ENCODE measurements at regions of chr5 and their contacts with region 1.

Region 1: GRCh38 chr5:177071666-177072385 is 14.9 kb upstream of the FGFR4 start:
- DNase-seq: peak; percentile 96
- ATAC-seq: peak; percentile 97
- H3K4me3 ChIP-seq: no peak overlapping the region
- H3K27ac ChIP-seq: no peak overlapping the region
- H3K4me1 ChIP-seq: no peaks in the 10 kb centered on the region
- H3K27me3 ChIP-seq: no peaks in the 10 kb centered on the region
- CTCF ChIP-seq: peak; percentile 96

Region 2: GRCh38 chr5:176875783-176876505 is 195.9 kb before region 1 on chr5:
- CTCF ChIA-PET with region 1: no interaction called
- POLR2A ChIA-PET with region 1: no interaction called
- intact Hi-C with region 1: no loop called
- DNase-seq: no peak
- ATAC-seq: no peak
- H3K4me3 ChIP-seq: no peak overlapping the region
- H3K27ac ChIP-seq: no peak overlapping the region
- H3K4me1 ChIP-seq: no peaks in the 10 kb centered on the region
- H3K27me3 ChIP-seq: peaks cover 25% of the 10 kb centered on the region
- CTCF ChIP-seq: no peak

Region 3: DNA sequence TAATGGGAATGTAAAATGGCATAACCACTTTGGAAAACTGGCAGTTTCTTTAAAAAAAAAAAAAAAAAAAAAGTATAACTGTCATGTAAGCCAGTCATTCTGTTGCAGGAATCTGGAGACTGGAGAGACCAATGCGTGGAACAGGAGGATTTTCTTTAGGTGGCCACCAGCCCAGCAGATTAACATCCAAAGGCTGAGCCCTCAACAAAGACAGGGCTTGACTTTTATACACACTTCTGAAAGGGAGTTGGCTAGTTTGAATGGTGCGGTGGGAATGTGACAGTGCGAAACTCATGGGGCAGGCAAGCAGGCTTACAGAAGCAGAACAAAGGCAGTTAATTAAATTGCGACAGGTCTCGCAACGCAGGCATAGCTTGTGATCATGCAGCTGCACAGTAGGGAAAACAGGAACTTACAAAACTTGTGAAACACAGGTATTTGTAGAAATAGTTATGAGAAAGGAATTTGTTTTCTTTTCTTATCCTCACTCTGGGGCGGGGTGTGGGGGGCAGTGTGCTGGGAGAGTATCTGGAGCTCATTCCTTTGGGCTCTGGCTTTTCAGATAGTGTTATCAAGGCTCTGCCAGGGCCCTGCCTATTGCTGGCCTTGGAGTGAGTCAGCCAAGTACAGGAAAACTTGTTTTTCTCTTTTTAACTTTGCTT is 77.2 kb before region 1 on chr5:
- CTCF ChIA-PET with region 1: interaction called, 21 read pairs
- POLR2A ChIA-PET with region 1: no interaction called
- intact Hi-C with region 1: no loop called
- DNase-seq: no peak
- ATAC-seq: no peak
- H3K4me3 ChIP-seq: no peak overlapping the region
- H3K27ac ChIP-seq: 0 out of 2 replicates have a peak overlapping the region, but pooled peaks have one; percentile 11
- H3K4me1 ChIP-seq: peaks cover 28% of the 10 kb centered on the region
- H3K27me3 ChIP-seq: no peaks in the 10 kb centered on the region
- CTCF ChIP-seq: no peak

Region 4: DNA sequence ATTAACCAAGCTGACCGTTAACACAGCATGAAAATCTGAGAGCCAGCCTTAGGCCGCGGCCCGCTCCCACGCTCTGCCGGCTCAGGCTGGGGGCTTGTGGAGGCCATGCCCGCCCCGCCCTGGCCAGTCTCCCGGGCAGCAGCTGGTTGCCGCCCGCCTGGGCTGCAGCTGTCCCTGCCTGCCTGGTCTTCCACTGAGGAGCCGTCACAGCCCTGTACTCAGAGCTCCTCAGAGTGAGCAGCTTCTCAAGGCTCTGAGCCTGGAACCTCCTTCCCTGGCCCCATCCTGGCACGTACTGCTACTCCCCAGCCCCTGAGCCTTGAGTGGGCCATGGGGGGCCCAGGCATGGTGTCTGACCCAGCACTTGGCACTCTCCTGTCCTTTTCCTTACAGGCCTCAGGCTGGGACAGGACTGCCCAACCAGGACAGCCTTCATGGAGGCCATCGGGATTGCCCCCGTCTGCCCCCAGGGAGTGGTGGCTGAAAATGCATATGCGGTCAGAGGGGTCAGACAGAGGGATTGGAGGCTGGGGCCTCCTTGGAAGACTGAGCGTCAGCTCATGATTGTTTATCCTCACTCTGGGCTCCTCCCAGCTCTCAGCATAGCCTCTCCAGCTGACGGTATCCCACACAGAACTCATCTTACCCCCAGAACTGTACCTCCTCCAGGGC is 26.8 kb after region 1 on chr5:
- CTCF ChIA-PET with region 1: interaction called, 11 read pairs
- POLR2A ChIA-PET with region 1: no interaction called
- intact Hi-C with region 1: no loop called
- DNase-seq: no peak
- ATAC-seq: no peak
- H3K4me3 ChIP-seq: no peak overlapping the region
- H3K27ac ChIP-seq: no peak overlapping the region
- H3K4me1 ChIP-seq: no peaks in the 10 kb centered on the region; the same call in 1 of the 2 replicates
- H3K27me3 ChIP-seq: no peaks in the 10 kb centered on the region
- CTCF ChIP-seq: no peak

Measured in PC-3 (cell line).